ENCODE measurements at regions of chr10 and their contacts with region 1.

Region 1: DNA sequence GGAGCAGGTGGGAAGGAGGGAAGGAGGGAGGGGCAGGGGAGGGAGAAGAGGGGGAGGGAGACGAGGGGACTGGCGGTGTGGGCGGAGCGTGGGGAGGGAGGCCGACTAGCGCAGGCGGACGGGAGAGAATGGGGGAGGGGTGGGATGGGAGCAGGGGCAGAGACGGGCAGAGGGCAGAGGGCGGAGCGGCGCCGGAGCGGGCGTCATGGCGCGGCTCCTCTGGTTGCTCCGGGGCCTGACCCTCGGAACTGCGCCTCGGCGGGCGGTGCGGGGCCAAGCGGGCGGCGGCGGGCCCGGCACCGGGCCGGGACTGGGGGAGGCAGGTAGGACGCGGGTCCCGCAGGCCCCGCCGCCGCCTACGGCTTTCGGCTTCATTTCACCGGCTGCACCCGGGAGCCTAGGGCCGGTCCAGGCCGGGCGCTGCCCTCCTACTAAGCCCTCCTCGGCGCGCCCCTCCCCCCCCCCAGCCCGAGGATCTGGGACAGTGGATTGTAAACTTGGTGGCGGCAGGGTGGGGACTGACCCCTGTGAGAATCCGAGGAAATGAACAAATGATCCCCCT is at the start of gene MSRB2:
- DNase-seq: peak; percentile 60 to 94
- H3K4me3 ChIP-seq: peak within 1 kb of the TSS; percentile 86 to 90
- H3K27ac ChIP-seq: peak within 1 kb of the TSS; percentile 93 to 94
- H3K4me1 ChIP-seq: peaks cover 0 to 11% of the 10 kb centered on the region in 2 donors
- H3K27me3 ChIP-seq: no peaks in the 10 kb centered on the region
- CTCF ChIP-seq: no peak
- total RNA-seq, gene MSRB2: 38.0 TPM

Region 2: DNA sequence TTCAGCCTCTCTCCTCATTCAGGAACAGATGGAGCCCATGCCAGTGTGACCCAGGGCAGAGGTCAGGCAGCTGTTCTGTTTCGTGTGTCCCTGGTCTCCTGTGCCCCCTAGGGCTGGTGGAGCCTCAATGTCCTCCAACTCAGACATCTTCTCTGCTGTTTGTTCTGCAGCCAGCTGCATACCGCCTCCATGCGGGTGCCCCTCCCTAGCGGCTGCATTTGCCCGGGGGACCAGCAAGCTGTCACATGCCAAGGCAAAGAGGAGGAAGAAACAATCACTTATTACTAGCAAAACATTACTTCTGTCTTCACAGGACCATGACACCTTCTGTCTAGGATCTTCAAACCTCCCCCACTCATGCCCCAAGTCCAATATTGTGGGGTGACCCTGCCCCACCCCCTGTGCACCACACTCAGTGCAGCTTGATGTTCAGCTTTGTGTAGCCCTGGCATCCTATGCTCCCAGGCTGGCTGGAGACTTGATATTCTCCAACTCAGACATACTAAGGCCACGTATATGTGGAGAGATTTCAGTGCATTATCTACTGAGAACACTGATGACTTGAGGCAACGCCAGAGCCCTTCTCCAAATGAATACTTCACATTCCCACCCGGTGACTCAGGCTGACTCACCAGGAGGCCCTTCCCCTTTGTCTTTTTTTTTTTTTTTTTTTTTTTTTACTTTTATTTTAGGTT is 1758.9 kb before region 1 on chr10:
- intact Hi-C with region 1: loop called (anchors 10 kb)
- DNase-seq: peak in 1 of 2 donors; percentile 75
- H3K4me3 ChIP-seq: no peak overlapping the region
- H3K27ac ChIP-seq: no peak overlapping the region
- H3K4me1 ChIP-seq: peaks cover 2 to 18% of the 10 kb centered on the region in 2 donors
- H3K27me3 ChIP-seq: no peaks in the 10 kb centered on the region
- CTCF ChIP-seq: no peak

Region 3: DNA sequence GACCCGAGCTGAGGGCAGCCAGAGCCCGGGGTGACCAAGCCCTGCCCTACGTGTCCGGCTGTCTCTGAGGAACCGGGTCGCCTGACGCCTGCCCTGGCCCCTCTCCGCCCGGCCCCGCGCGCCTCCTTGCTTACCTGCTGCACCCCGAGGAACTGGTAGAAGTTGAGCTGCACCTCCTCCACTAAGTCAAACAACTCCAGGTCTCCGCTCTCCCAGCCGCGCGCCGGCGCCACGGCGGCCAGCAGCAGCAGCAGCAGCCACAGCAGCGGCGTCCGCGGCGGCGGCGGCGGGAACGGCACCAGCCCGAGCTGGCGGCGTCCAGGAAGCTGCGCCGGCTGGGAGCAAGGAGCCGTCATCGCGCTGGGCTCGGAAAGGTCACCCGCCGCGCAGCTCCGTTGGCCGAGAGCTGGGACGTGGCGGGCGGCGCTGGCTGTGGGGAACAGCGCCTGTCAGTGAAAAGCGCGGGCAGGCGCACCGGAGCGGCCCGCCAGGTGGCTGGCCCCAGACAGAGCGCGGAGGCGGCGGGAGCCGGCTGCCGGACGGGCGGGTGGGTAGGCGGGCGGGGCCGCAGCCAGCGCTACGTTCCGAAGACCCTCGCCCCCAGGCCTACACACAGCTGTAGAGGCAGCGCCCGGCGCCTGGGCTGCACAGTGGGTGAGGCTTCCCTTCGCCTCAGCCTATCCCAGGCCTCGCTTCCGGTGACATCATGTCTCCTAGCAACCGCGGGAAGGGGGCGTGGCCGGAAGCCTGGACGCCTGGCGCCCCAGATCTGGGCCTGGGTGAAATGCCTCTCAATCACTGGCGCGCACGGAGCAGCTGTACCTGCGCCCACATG is 1092.2 kb before region 1 on chr10 and contains the start of gene DNAJC1:
- intact Hi-C with region 1: loop called (anchors 1 kb)
- DNase-seq: peak; percentile 93 to 99
- H3K4me3 ChIP-seq: peak within 1 kb of the TSS; percentile 74 to 81
- H3K27ac ChIP-seq: peak within 1 kb of the TSS; percentile 96
- H3K4me1 ChIP-seq: peaks cover 0 to 6% of the 10 kb centered on the region in 2 donors
- H3K27me3 ChIP-seq: no peaks in the 10 kb centered on the region
- CTCF ChIP-seq: peak in 2 of 3 experiments; percentile 13 to 15
- total RNA-seq, gene DNAJC1: 26.1 TPM

Region 4: DNA sequence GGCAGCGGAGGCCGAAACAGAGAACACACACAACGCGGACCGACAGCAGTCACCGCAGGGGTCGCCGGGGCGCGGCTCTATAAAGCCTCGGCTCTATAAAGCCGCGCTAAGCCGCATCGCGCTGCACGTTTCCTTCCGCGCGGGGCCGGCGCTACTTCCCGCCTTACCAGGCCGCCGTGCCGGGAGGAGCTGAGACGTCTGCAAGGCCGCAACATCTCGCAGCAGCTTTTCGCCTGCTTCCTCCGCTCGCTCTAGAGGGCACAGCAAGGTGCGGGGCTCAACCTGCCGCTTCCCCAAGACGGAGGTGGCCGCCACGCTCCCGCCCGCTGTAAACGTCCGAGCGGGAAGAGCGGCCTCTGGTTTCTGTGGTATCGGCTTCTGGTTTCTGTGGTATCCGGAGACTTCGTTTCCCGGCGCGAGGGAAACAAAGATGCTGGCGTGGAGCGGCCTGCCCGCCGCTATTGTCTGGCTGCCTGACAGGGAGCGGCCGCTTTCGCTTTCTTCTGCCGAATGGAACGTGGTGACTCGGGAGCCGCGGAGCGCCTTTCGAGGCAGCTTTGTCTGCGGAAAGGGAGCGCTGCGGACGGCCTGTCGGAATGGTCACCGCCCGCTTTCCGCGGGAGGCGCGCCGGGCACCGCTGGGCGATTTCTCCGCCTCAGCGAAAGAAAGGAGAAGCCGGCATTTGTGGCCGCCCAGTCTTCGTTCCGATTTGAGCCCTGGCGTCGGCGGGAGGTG is 658.4 kb before region 1 on chr10:
- intact Hi-C with region 1: loop called (anchors 2 kb)
- DNase-seq: peak; percentile 43 to 94
- H3K4me3 ChIP-seq: peak overlapping the region; percentile 72 to 78
- H3K27ac ChIP-seq: peak overlapping the region; percentile 92 to 97
- H3K4me1 ChIP-seq: peaks cover 0 to 15% of the 10 kb centered on the region in 2 donors
- H3K27me3 ChIP-seq: no peaks in the 10 kb centered on the region
- CTCF ChIP-seq: peak in 1 of 3 experiments; percentile 19

Region 5: DNA sequence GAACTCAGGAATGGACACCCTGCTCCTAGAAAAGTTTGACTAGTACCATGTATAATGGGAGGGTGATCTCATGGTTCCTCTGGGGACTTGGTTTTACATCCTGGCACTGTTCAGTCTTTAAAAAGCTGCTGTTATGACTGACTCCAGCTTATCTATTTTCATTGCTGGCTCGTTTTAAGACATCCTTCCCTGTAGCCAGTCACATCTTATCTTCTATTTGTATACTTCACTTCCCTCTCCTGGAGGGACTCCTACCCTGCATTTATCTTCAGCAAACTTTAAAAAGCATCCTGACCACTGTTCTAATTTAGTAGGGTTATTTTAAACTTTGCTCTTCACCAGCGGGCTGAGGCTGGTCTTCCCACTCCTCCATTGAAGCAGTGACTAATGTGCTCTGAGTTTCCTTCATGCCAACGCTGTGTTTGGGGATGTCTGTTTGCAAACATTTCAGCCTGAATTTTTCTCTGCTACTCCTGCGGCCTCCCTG is 240.5 kb before region 1 on chr10:
- intact Hi-C with region 1: loop called (anchors 10 kb)
- DNase-seq: no peak
- H3K4me3 ChIP-seq: no peak overlapping the region
- H3K27ac ChIP-seq: peak overlapping the region; percentile 27 to 39
- H3K4me1 ChIP-seq: peaks cover 7 to 21% of the 10 kb centered on the region in 2 donors
- H3K27me3 ChIP-seq: no peaks in the 10 kb centered on the region
- CTCF ChIP-seq: peak in 2 of 3 experiments; percentile 13 to 35

Region 6: DNA sequence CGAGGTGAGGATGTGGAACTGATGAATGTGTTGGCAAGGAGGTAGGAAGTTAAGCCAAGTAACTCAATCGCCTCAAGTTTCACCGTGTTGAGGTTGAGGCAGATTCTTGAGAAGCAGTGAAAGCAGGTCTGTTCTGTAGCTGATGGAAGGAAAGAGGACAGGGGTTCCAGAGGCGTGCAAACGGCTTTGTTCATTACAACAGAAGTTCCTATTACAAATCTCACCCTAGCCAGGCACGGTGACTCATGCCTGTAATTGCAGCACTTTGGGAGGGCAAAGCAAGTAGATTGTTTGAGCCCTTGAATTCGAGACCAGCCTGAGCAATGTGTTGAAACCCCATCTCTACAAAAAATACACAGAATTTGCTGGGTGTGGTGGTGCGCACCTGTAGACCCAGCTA is 59.7 kb after region 1 on chr10:
- intact Hi-C with region 1: no loop called
- DNase-seq: no peak
- H3K4me3 ChIP-seq: no peak overlapping the region
- H3K27ac ChIP-seq: no peak overlapping the region
- H3K4me1 ChIP-seq: no peaks in the 10 kb centered on the region
- H3K27me3 ChIP-seq: no peaks in the 10 kb centered on the region
- CTCF ChIP-seq: no peak

Region 7: GRCh38 chr10:23438550-23439441 is 343.3 kb after region 1 on chr10 and contains the start of gene OTUD1:
- intact Hi-C with region 1: loop called (anchors 2 kb)
- DNase-seq: peak; percentile 82 to 98
- H3K4me3 ChIP-seq: peak within 1 kb of the TSS; percentile 91 to 96
- H3K27ac ChIP-seq: peak within 1 kb of the TSS; percentile 88 to 93
- H3K4me1 ChIP-seq: peaks cover 0 to 24% of the 10 kb centered on the region in 2 donors
- H3K27me3 ChIP-seq: no peaks in the 10 kb centered on the region
- CTCF ChIP-seq: peak in 1 of 3 experiments; percentile 26
- total RNA-seq, gene OTUD1: 24.1 TPM

Region 8: GRCh38 chr10:24503461-24504320 is 1408.2 kb after region 1 on chr10:
- intact Hi-C with region 1: no loop called
- DNase-seq: no peak
- H3K4me3 ChIP-seq: no peak overlapping the region
- H3K27ac ChIP-seq: no peak overlapping the region
- H3K4me1 ChIP-seq: no peaks in the 10 kb centered on the region
- H3K27me3 ChIP-seq: no peaks in the 10 kb centered on the region
- CTCF ChIP-seq: peak in 2 of 3 experiments; percentile 7 to 59